ENCODE measurements at regions of chr4 and their contacts with region 1.

Region 1: GRCh38 chr4:38034986-38035882 is 75.0 kb downstream of the PTTG2 start:
- DNase-seq: peak; percentile 71
- ATAC-seq: peak; percentile 67
- H3K4me3 ChIP-seq: no peak overlapping the region
- H3K4me3 Mint-ChIP-seq: no peak overlapping the region
- H3K27ac ChIP-seq: no peak overlapping the region
- H3K27ac Mint-ChIP-seq: no peak overlapping the region
- H3K4me1 ChIP-seq: no peaks in the 10 kb centered on the region
- H3K4me1 Mint-ChIP-seq: no peaks in the 10 kb centered on the region
- H3K27me3 ChIP-seq: no peaks in the 10 kb centered on the region
- H3K27me3 Mint-ChIP-seq: no peaks in the 10 kb centered on the region
- CTCF ChIP-seq: peak; percentile 91

Region 2: GRCh38 chr4:37686373-37687193 is 348.7 kb before region 1 on chr4 and contains the start of gene RELL1:
- CTCF ChIA-PET with region 1: no interaction called
- POLR2A ChIA-PET with region 1: no interaction called
- intact Hi-C with region 1: loop called (anchors 5 kb)
- DNase-seq: peak; percentile 96
- ATAC-seq: peak; percentile 85
- H3K4me3 ChIP-seq: peak within 1 kb of the TSS; percentile 66 to 86 (median 81)
- H3K4me3 Mint-ChIP-seq: peak within 1 kb of the TSS; percentile 92
- H3K27ac ChIP-seq: peak within 1 kb of the TSS; percentile 45 to 70
- H3K27ac Mint-ChIP-seq: peak within 1 kb of the TSS; percentile 89
- H3K4me1 ChIP-seq: peaks cover 31% of the 10 kb centered on the region in 2 donors
- H3K4me1 Mint-ChIP-seq: peaks cover 31% of the 10 kb centered on the region
- H3K27me3 ChIP-seq: peaks cover 0 to 12% (median 4%) of the 10 kb centered on the region in 4 experiments
- H3K27me3 Mint-ChIP-seq: peaks cover 12% of the 10 kb centered on the region
- CTCF ChIP-seq: no peak
- total RNA-seq, gene RELL1: 2.7 and 3.2 TPM in 2 replicates

Region 3: DNA sequence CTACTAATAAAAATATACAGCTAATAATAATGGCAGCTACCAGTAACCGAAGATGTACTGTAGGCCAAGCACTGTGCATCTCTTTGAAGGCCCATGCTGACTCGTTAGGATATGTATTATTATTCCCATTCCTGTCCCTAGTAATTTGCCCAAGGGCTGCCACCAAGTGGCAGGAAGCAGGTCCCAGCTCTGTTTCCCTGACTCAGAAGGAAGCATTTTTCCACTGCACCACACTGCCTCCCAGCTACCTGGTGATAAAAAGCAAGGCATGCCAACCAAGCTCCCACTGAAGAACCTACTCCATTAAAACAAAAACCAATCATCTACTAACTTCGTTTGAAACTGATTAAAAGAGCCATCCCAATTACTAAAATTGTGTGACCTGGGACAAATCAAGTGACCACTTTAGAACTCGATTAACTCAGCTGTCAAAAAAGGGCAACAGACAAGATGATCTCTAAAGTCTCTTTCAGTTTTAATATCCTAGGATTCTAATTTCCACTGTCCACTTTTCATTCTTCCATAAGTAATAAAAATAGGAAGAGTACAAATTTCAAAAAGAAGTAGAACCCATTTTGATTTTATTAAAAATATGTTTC is 233.1 kb before region 1 on chr4:
- CTCF ChIA-PET with region 1: interaction called, 253 read pairs
- POLR2A ChIA-PET with region 1: no interaction called
- intact Hi-C with region 1: loop called (anchors 1 kb)
- DNase-seq: no peak
- ATAC-seq: no peak
- H3K4me3 ChIP-seq: no peak overlapping the region
- H3K4me3 Mint-ChIP-seq: no peak overlapping the region
- H3K27ac ChIP-seq: no peak overlapping the region
- H3K27ac Mint-ChIP-seq: no peak overlapping the region
- H3K4me1 ChIP-seq: no peaks in the 10 kb centered on the region
- H3K4me1 Mint-ChIP-seq: peaks cover 3% of the 10 kb centered on the region
- H3K27me3 ChIP-seq: no peaks in the 10 kb centered on the region
- H3K27me3 Mint-ChIP-seq: peaks cover 6% of the 10 kb centered on the region
- CTCF ChIP-seq: no peak

Region 4: GRCh38 chr4:37891260-37892159 is 143.7 kb before region 1 on chr4:
- CTCF ChIA-PET with region 1: interaction called, 12 read pairs
- POLR2A ChIA-PET with region 1: no interaction called
- intact Hi-C with region 1: loop called (anchors 5 kb)
- DNase-seq: peak; percentile 85
- ATAC-seq: peak; percentile 52
- H3K4me3 ChIP-seq: peak overlapping the region; percentile 72 to 96 (median 72)
- H3K4me3 Mint-ChIP-seq: peak overlapping the region; percentile 91
- H3K27ac ChIP-seq: peak overlapping the region; percentile 92 to 95
- H3K27ac Mint-ChIP-seq: peak overlapping the region; percentile 98
- H3K4me1 ChIP-seq: peaks cover 49 to 50% of the 10 kb centered on the region in 2 donors
- H3K4me1 Mint-ChIP-seq: peaks cover 62% of the 10 kb centered on the region
- H3K27me3 ChIP-seq: no peaks in the 10 kb centered on the region
- H3K27me3 Mint-ChIP-seq: no peaks in the 10 kb centered on the region
- CTCF ChIP-seq: no peak

Region 5: GRCh38 chr4:37999000-37999723 is 36.1 kb before region 1 on chr4:
- CTCF ChIA-PET with region 1: no interaction called
- POLR2A ChIA-PET with region 1: no interaction called
- intact Hi-C with region 1: no loop called
- DNase-seq: no peak
- ATAC-seq: no peak
- H3K4me3 ChIP-seq: no peak overlapping the region
- H3K4me3 Mint-ChIP-seq: no peak overlapping the region
- H3K27ac ChIP-seq: no peak overlapping the region
- H3K27ac Mint-ChIP-seq: no peak overlapping the region
- H3K4me1 ChIP-seq: peaks cover 26 to 27% of the 10 kb centered on the region in 2 donors
- H3K4me1 Mint-ChIP-seq: peaks cover 53% of the 10 kb centered on the region
- H3K27me3 ChIP-seq: no peaks in the 10 kb centered on the region
- H3K27me3 Mint-ChIP-seq: no peaks in the 10 kb centered on the region
- CTCF ChIP-seq: no peak

Region 6: DNA sequence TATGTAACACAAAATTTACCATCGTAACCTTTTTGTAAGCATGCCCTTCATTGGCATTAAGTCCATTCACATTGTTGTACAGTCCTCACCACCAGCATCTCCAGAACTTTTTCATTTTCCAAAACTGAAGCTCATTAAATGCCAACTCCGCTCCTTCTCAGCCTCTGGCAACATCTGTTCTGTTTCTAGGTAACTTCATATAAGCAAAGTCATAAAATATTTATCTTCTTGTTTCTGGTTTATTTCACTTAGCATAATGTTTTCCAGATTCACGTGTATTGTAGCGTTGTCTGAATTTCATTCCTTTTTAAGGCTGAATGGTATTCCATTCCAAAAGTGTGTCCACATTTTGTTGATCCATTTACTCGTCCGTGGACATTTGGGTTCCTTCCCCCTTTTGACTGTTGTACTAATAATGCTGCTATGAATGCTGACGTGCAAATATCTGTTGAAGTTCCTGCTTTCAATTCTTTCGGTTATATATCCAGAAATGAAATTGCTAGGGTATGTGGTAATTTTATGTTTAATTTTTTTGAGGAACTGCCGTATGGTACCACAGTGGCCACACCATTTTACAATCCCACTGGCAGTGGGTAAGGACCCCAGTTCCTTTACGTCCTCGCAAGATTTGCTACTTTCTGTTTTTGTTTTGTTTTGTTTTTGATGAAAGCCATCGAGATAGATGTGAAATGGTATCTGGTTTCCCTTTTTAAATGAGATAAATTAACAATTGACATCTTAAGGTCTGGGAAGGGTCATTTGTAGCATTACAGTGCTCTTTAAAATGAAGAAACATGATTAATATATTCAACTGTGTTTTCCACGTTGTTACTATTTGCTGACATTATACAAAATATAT is 11.7 kb before region 1 on chr4:
- CTCF ChIA-PET with region 1: interaction called, 11 read pairs
- POLR2A ChIA-PET with region 1: no interaction called
- intact Hi-C with region 1: no loop called
- DNase-seq: no peak
- ATAC-seq: no peak
- H3K4me3 ChIP-seq: no peak overlapping the region
- H3K4me3 Mint-ChIP-seq: no peak overlapping the region
- H3K27ac ChIP-seq: no peak overlapping the region
- H3K27ac Mint-ChIP-seq: no peak overlapping the region
- H3K4me1 ChIP-seq: peaks cover 3 to 4% of the 10 kb centered on the region in 2 donors
- H3K4me1 Mint-ChIP-seq: peaks cover 16% of the 10 kb centered on the region
- H3K27me3 ChIP-seq: no peaks in the 10 kb centered on the region
- H3K27me3 Mint-ChIP-seq: no peaks in the 10 kb centered on the region
- CTCF ChIP-seq: no peak